Naive thymus-derived CD8-positive, alpha-beta T cell (primary cell): ENCODE measurements at regions of chr2 and their contacts with region 1.

Region 1: DNA sequence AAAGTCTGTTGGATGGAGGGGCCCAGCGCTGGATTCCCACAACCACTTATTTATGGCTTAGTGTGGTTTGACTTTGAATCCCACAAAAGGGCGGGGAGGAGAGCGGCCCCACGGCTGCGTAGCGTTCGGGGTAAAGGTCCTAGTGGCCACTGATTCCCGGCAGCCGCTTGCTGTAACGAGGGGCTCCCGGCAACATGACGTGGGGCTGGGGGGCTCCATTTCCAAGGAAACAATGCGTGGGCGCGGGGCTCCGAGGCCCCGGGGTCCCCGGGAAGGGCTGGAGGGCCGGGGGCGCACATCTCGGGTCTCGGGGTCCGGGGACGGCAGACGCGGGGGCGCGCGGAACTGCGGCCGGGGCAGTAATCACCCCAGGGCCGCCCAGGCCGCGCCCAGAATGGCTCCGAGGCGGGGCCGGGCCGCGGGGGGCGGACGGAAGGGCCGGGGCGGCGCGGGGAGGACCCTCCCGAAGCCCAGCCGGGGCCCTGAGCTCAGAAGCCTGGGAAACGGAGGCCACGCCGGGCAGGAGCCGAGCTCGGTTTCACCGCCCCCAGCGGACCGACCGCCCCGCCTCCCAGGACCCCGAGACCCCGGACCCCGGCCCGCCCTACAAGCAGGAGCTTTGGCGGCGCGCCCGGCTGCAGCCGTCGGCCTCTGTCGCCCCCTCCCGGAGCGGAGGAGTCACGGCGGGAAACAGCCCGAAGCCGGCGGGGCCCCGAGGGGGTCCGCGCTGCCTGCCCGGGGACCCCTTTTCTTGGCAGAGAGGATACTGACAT is 11.9 kb upstream of the MLPH start:
- DNase-seq: peak; percentile 53 to 85 (median 76)
- ATAC-seq: peak; percentile 85 to 89
- H3K4me3 Mint-ChIP-seq: peak overlapping the region; percentile 81 to 92 (median 88)
- H3K27ac Mint-ChIP-seq: peak overlapping the region; percentile 68 to 93 (median 90)
- H3K4me1 Mint-ChIP-seq: peaks cover 10 to 38% (median 22%) of the 10 kb centered on the region in 4 donors
- H3K27me3 Mint-ChIP-seq: peaks cover 11 to 26% (median 17%) of the 10 kb centered on the region in 5 donors

Region 2: DNA sequence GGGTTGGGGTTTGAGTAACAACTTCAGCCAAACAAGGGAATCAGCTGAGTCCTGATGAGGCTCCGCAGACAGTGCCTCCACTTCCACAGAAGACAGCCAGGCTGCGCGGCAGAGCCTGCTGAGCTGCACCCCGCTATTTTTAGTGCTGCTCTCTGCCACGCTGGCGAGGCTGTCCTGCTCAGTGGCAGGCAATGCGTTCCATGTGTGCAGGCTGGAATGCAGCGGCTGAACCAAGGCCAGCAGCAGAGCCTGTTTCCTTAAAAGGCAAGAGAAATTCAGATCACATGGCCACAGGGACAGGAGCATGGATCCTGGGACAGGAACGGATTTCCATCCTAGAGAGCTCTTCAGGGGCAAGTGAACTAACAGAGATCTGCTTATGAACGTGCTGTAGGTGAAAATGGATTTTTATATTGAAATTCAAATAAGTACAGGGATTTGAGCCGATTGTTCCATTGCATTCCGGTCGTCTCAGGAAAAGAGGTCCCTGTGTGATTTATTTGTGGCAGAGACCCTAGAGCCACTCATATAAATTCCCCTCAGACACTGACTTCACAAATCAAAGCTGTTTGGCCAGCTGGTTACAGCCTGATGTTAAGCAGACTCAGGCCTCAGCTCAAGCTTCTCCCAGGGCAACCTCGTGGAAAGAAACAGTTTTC is 159.8 kb before region 1 on chr2:
- POLR2A ChIA-PET with region 1: no interaction called
- DNase-seq: no peak
- ATAC-seq: no peak
- H3K4me3 Mint-ChIP-seq: no peak overlapping the region
- H3K27ac Mint-ChIP-seq: no peak overlapping the region
- H3K4me1 Mint-ChIP-seq: peaks cover 0 to 2% (median 0%) of the 10 kb centered on the region in 4 donors
- H3K27me3 Mint-ChIP-seq: peaks cover 0 to 16% (median 9%) of the 10 kb centered on the region in 5 donors

Region 3: DNA sequence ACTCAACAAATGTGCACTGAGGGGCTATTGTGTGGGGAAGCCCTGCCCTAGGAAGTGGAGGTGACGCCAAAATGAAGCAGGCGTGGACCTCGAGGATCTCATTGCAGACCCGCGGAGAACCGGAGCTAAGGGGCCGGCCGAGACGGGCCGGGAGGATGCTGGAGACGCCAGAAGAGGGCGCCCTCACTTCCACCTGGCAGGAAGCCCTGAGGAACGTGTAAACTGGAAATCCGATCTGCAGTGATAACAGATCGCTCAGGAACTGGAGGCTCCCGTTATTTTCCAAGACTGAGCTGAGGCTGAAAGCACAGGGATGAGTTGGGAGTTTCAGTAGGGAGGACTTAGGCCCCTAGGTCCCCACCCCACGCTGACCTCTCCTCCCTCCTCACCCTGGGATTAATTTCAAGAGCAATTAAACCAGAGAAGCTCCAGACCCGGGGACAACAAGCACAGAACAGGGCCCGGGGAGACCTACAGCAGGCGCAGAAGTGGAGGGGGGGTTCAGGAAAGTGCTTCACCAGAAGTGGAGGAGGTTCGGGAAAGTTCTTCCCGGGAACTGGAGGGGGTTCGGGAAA is 53.5 kb before region 1 on chr2:
- POLR2A ChIA-PET with region 1: interaction called, 59 read pairs
- DNase-seq: peak; percentile 59 to 87 (median 76)
- ATAC-seq: peak; percentile 89 to 99
- H3K4me3 Mint-ChIP-seq: peak overlapping the region; percentile 38 to 81 (median 74)
- H3K27ac Mint-ChIP-seq: peak overlapping the region; percentile 57 to 91 (median 86)
- H3K4me1 Mint-ChIP-seq: peaks cover 13 to 43% (median 30%) of the 10 kb centered on the region in 4 donors
- H3K27me3 Mint-ChIP-seq: peaks cover 0 to 2% (median 0%) of the 10 kb centered on the region in 5 donors

Region 4: GRCh38 chr2:237427769-237428506 is 47.2 kb before region 1 on chr2:
- POLR2A ChIA-PET with region 1: interaction called, 59 read pairs
- DNase-seq: peak in 5 of 10 donors; percentile 15 to 79 (median 37)
- ATAC-seq: peak; percentile 48 to 54
- H3K4me3 Mint-ChIP-seq: peak overlapping the region in 9 of 10 donors; percentile 37 to 79 (median 68)
- H3K27ac Mint-ChIP-seq: peak overlapping the region; percentile 23 to 100 (median 88)
- H3K4me1 Mint-ChIP-seq: peaks cover 32 to 89% (median 74%) of the 10 kb centered on the region in 4 donors
- H3K27me3 Mint-ChIP-seq: no peaks in the 10 kb centered on the region

Region 5: GRCh38 chr2:237434866-237435311 is 40.2 kb before region 1 on chr2:
- POLR2A ChIA-PET with region 1: interaction called, 37 read pairs
- DNase-seq: peak; percentile 36 to 88 (median 74)
- ATAC-seq: peak; percentile 69 to 83
- H3K4me3 Mint-ChIP-seq: peak overlapping the region; percentile 76 to 92 (median 88)
- H3K27ac Mint-ChIP-seq: peak overlapping the region; percentile 89 to 100 (median 97)
- H3K4me1 Mint-ChIP-seq: peaks cover 45 to 88% (median 85%) of the 10 kb centered on the region in 4 donors
- H3K27me3 Mint-ChIP-seq: no peaks in the 10 kb centered on the region

Region 6: GRCh38 chr2:237451643-237452469 is 23.3 kb before region 1 on chr2:
- POLR2A ChIA-PET with region 1: no interaction called
- DNase-seq: no peak
- ATAC-seq: no peak
- H3K4me3 Mint-ChIP-seq: no peak overlapping the region
- H3K27ac Mint-ChIP-seq: peak overlapping the region in 1 of 10 donors; percentile 17
- H3K4me1 Mint-ChIP-seq: peaks cover 8 to 29% (median 15%) of the 10 kb centered on the region in 4 donors
- H3K27me3 Mint-ChIP-seq: no peaks in the 10 kb centered on the region

Region 7: GRCh38 chr2:237603718-237604362 is 128.7 kb after region 1 on chr2:
- POLR2A ChIA-PET with region 1: no interaction called
- DNase-seq: peak; percentile 34 to 90 (median 80)
- ATAC-seq: peak; percentile 95 to 97
- H3K4me3 Mint-ChIP-seq: peak overlapping the region; percentile 65 to 84 (median 81)
- H3K27ac Mint-ChIP-seq: peak overlapping the region; percentile 86 to 99 (median 98)
- H3K4me1 Mint-ChIP-seq: peaks cover 20 to 36% (median 25%) of the 10 kb centered on the region in 4 donors
- H3K27me3 Mint-ChIP-seq: no peaks in the 10 kb centered on the region